ENCODE measurements at regions of chr1 and their contacts with region 1.

Region 1: DNA sequence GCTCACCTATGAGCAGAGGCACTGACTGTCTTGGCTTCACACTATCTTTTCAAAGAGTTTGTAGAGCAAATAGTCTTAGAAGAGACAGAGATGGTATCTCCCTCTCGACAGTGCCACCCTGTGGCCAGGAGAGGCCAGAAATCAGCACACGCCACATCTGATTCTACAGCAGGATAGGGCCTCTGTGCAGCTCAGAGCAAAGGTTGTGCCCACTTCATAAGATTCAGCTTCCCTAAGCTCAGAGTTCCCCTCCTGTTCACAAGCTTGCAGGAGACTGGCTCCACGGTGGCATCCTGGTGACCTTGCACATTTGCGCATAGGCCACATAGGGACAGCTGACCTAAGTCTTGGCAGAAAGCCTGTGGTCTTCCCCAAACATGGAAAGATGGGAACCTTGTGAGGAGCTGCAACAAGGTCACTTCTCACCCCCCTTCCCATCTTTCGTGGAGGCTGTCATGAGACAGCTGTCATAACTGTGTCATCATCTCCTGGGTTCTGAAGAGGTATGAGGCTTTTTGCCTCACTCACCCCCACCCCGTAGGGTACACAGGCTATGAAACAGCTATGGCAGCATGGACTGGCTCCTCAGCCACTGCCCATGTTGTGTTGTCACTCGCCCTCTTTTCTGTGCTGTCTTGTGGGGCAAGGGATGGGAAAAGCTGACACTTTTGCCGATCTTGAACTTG is 3.0 kb downstream of the ITLN2 start:
- DNase-seq: peak; percentile 82 to 85
- H3K4me3 ChIP-seq: no peak overlapping the region
- H3K27ac ChIP-seq: no peak overlapping the region
- H3K4me1 ChIP-seq: peaks cover 0 to 24% (median 0%) of the 10 kb centered on the region in 4 donors
- H3K27me3 ChIP-seq: no peaks in the 10 kb centered on the region
- CTCF ChIP-seq: peak in 5 of 7 experiments; percentile 29 to 81 (median 61)
- EP300 ChIP-seq: no peak
- POLR2A ChIP-seq: no peak

Region 2: DNA sequence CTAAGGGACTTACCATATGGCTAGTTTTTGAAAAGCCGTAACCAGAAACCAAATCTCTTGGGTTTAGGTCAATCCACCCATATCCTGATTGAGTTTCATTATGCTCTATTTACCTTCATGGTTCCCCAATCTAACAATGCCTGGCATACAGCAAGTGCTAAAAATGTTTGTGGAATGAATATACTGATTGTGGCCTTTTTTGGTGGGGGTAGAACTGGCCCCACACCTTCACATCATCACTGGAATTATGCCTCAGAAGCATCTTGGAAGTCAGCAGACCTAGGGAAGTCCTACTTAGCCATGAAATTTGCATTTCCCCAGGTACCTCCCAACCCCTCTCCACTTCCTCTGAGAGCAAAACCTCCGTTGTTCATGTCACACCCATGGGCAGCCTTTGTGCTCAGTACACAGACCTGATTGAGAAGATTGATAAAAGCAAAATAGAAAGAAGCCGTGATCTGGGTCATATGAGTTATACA is 287.0 kb before region 1 on chr1:
- intact Hi-C with region 1: no loop called
- DNase-seq: no peak
- H3K4me3 ChIP-seq: no peak overlapping the region
- H3K27ac ChIP-seq: peak overlapping the region in 3 of 5 donors; percentile 2 to 80 (median 71)
- H3K4me1 ChIP-seq: peaks cover 0 to 26% (median 4%) of the 10 kb centered on the region in 4 donors
- H3K27me3 ChIP-seq: no peaks in the 10 kb centered on the region
- CTCF ChIP-seq: no peak
- EP300 ChIP-seq: no peak
- POLR2A ChIP-seq: no peak

Region 3: DNA sequence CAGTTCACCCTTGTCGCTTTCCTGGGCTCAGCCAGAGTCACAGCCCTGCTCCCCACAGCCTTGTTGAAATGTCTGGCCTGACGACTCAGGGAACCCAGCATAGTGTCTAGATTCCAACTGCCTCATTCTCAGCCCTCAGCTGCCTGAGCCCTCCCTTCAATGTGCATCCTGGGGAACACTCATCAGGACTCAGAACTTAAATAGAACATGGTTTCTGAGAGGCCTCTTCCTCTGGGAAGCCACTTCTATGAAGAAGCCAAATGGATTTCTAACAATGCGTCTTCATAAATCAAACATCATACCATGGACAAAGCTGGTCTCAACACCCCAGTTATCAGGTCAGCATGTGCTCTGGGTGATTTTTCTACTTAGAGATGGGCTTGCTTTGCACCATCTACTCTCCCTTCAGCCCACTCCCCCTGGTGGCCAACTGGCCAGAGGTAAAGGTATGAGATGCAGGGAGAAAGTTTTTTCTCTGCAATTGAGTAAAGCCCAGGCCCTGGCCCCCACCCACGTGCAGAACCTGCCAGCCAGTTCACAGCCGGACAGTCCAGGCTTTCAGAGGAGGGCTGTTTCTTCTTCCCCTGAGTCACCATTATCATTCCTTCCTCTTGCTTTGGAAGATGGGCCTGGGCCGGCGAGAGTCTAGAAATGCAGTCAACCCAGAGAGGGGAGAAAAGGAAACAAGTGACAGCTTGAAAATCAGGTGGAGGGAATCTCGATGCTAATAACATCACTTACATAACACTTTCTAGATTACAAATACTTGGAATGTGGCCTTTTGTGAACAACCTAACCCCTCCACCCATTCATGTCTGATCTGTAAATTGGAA is 121.0 kb before region 1 on chr1:
- intact Hi-C with region 1: loop called (anchors 10 kb)
- DNase-seq: peak; percentile 83 to 89
- H3K4me3 ChIP-seq: no peak overlapping the region
- H3K27ac ChIP-seq: no peak overlapping the region
- H3K4me1 ChIP-seq: no peaks in the 10 kb centered on the region
- H3K27me3 ChIP-seq: no peaks in the 10 kb centered on the region
- CTCF ChIP-seq: peak in 5 of 7 experiments; percentile 39 to 87 (median 63)
- EP300 ChIP-seq: no peak
- POLR2A ChIP-seq: no peak

Region 4: GRCh38 chr1:160862203-160863060 is 89.2 kb before region 1 on chr1 and contains the start of gene CD244:
- intact Hi-C with region 1: loop called (anchors 10 kb)
- DNase-seq: peak; percentile 38 to 47
- H3K4me3 ChIP-seq: peak within 1 kb of the TSS in 2 of 4 donors; percentile 10 to 15
- H3K27ac ChIP-seq: peak within 1 kb of the TSS in 3 of 5 donors; percentile 8 to 50 (median 42)
- H3K4me1 ChIP-seq: peaks cover 0 to 20% (median 4%) of the 10 kb centered on the region in 4 donors
- H3K27me3 ChIP-seq: no peaks in the 10 kb centered on the region
- CTCF ChIP-seq: no peak
- EP300 ChIP-seq: no peak
- POLR2A ChIP-seq: no peak
- total RNA-seq, gene CD244: 0.43 to 1.1 TPM in 2 of 5 donors, not detected in the others

Measured in stomach (tissue), 19 donors.